PC-9 (cell line): ENCODE measurements at regions of chr12 and their contacts with region 1.

Region 1: DNA sequence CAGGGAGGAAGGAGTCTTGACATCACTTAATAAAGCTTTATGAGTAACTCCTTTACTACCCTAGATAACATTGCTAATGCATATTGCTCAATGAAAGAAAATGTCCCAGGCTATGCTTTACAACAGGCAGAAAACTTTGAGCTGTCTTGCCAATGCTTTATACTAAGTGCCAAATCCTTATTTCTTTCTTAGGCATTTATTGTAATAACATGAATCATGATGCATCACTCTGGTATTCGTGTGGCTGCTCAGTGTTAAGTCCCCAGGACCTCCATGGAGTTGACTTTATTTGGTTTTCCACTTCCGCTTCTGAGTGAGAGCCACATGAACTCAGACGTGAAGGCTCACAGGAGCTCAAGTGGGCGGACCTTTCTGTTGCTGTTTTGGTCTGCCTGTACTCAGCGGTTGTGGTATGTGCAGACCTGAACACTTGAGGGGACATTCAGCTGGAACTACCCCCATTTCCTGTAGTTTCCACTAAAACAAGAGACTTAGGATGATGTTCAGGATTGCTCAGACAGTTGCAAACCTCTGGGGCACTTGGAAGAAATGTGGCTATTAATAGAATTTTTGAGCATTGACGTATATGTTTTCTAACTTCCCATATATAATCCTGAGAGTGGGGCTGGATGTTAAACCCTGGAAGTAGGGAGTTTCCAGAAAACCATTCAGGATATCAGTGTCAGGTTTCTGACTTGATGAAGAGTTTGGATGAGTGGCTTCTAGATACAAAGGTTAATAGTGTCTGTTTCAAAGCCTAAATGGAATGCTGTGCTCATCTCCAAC is 258.6 kb downstream of the MSRB3 start:
- DNase-seq: peak; percentile 55 to 60
- H3K4me3 ChIP-seq: no peak overlapping the region
- H3K27ac ChIP-seq: no peak overlapping the region
- H3K4me1 ChIP-seq: peaks cover 7% of the 10 kb centered on the region; the same call in 1 of the 2 replicates
- H3K27me3 ChIP-seq: no peaks in the 10 kb centered on the region
- CTCF ChIP-seq: no peak

Region 2: DNA sequence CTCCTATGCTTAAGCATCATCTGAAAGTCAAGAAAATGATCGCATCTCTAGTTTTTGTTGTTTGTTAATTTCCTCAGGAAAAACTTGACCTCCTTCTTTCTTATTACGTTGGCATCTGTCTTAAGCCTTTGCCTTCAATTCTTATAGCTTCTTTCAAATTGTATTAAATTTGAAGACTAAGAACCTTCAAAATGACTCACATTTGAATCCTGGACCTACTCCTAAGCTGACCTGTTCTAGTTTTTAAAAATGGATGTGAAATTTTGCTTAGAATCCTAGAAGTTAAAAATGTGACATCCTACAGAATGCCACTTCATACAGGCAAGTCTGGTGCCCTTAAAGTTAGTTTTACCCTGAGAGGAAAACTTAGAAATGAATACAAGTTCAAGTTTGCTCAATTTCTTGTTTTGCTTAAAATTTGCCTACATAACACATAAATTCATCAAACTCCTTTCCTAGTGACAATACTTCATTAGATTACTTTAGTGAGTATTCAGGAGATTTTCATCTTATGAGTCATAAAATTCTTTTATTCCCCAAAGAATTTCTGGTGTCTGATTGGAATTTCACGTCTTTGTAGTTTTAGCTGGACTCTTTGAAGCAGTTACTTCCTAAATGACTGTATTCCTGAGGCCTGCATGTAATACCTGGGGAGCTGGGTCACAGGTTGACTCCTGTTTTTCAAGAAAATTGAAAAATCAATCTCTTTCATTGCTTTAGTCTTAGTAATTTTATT is 106.3 kb before region 1 on chr12:
- CTCF ChIA-PET with region 1: no interaction called
- POLR2A ChIA-PET with region 1: no interaction called
- intact Hi-C with region 1: no loop called
- DNase-seq: peak; percentile 7 to 78
- H3K4me3 ChIP-seq: no peak overlapping the region
- H3K27ac ChIP-seq: peak overlapping the region; percentile 41
- H3K4me1 ChIP-seq: peaks cover 14% of the 10 kb centered on the region
- H3K27me3 ChIP-seq: no peaks in the 10 kb centered on the region
- CTCF ChIP-seq: no peak

Region 3: DNA sequence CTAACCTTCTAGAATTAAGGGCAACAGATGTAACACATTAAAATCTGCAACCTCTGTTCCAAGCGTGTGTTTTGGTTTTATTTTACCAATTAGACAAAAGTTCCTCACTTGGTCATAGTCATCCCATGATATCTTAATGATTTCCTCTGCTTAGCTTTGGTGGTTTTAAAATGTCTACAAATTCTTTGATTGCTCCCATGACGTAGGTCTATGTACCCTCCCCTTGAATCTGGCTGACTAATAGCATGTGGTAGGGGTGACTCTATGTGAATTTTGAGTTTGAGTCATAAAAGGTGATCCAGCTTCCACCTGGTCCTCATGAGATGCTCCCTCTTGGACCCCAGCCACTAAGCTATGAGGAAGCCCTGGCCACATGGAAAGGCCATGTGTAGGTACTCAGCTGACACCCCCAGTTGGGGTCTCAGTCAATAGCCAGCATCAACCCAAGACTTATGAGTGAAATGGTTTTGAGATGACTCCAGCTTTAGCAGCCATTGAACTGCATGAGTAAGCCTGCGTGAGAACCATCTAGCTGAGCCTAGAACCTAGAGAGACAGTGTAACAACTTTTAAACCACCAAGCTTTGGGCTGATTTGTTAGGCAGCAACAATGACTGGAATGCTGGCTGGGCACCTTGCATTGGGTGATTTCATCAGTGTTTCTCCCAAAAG is 11.4 kb before region 1 on chr12:
- CTCF ChIA-PET with region 1: interaction called, 10 read pairs
- POLR2A ChIA-PET with region 1: no interaction called
- intact Hi-C with region 1: no loop called
- DNase-seq: no peak
- H3K4me3 ChIP-seq: no peak overlapping the region
- H3K27ac ChIP-seq: no peak overlapping the region
- H3K4me1 ChIP-seq: no peaks in the 10 kb centered on the region
- H3K27me3 ChIP-seq: no peaks in the 10 kb centered on the region
- CTCF ChIP-seq: no peak

Region 4: GRCh38 chr12:65615118-65615517 is 78.0 kb after region 1 on chr12:
- CTCF ChIA-PET with region 1: no interaction called
- POLR2A ChIA-PET with region 1: no interaction called
- intact Hi-C with region 1: no loop called
- DNase-seq: no peak
- H3K4me3 ChIP-seq: no peak overlapping the region
- H3K27ac ChIP-seq: no peak overlapping the region
- H3K4me1 ChIP-seq: peaks cover 7% of the 10 kb centered on the region
- H3K27me3 ChIP-seq: no peaks in the 10 kb centered on the region
- CTCF ChIP-seq: no peak